HEK293T (cell line): ENCODE measurements at regions of chr11 and their contacts with region 1.

Region 1: GRCh38 chr11:10351768-10352641 is 47.1 kb downstream of the ADM start:
- DNase-seq: peak; percentile 26

Region 2: GRCh38 chr11:10366568-10367370 is 14.8 kb after region 1 on chr11:
- CTCF ChIA-PET with region 1: interaction called, 10 read pairs
- POLR2A ChIA-PET with region 1: interaction called, 3 read pairs
- DNase-seq: peak; percentile 76

Region 3: DNA sequence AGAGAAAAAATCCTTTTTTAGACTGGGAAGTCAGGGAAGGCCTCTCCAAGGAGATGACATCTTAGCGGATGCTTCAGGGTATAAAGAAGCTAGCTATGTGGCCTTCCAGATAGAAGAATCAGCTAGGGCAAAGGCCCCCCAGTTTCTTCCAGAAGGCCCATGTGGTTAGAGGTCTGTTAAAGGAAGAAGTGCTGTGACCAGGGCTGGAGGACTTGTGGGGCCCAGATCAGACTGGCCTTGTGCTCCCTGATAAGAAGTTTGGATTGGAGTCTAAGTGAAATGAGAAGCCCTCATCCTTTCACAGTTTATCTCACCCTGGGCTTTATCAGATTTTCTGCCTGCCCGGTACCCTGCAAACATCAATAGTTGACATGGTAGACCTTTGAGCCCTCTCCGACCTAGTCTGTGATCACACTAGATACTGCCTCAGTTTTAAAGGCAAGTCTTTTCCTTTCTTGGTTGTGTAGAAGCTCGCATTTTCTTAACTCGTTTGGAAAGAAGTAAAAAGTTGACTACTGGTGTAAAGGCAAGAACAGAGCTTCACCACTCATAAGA is 110.8 kb after region 1 on chr11:
- CTCF ChIA-PET with region 1: no interaction called
- POLR2A ChIA-PET with region 1: no interaction called
- DNase-seq: no peak